ENCODE measurements at regions of chr6 and their contacts with region 1.

Region 1: DNA sequence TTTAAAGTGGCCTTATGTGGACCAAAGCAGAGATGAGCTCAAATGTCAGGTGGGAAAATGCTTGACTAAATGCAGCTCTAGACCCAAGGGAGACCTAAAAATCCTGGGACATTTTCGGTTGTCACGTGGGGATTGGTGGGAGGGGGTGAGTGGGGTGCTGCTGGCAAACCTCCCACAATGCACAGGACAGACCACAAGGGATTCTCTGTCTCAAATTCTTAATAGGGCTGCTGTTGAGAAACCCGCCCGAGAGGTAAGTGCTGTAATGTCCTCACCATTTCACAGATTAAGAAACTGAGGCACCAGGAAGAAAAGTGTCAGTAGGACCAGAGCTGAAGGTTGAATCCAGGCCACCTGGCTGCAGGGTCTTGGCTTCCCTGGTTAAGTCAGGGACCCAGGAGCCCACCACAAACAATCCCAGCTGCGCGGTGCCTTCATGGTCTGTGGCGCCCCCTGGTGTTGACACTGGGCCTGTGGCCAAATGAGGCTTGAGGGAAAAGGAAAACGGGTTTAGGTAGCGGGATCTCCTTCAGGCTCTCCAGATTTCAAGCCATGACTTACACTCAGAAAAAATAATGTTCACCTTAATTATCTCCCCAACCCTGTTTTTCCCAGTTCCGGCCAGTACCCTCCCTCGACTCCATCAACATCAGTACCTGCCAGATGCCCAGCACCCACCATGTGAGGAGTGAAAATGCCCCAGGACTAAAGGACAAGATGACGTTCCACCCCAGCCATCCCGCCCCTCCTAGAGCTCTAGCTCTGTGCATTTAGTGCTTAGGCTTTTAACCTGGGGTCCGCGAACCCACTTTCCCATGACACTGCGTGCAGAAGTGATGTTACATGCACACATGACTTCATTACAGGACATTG is 7.2 kb downstream of the HLA-G start:
- DNase-seq: peak; percentile 51
- H3K4me3 ChIP-seq: no peak overlapping the region
- H3K27ac ChIP-seq: no peak overlapping the region
- H3K4me1 ChIP-seq: no peaks in the 10 kb centered on the region
- H3K27me3 ChIP-seq: peaks cover 33% of the 10 kb centered on the region

Region 2: GRCh38 chr6:29737707-29738630 is 96.8 kb before region 1 on chr6:
- in situ Hi-C with region 1: loop called (anchors 5 kb)
- DNase-seq: peak; percentile 83
- H3K4me3 ChIP-seq: no peak overlapping the region
- H3K27ac ChIP-seq: no peak overlapping the region
- H3K4me1 ChIP-seq: no peaks in the 10 kb centered on the region
- H3K27me3 ChIP-seq: no peaks in the 10 kb centered on the region